Heart right ventricle (tissue), 16 donors: ENCODE measurements at regions of chr14 and their contacts with region 1.

Region 1: GRCh38 chr14:50003213-50004031 is 110.5 kb downstream of the ARF6 start:
- DNase-seq: peak; percentile 80 to 85
- ATAC-seq: peak; percentile 48 to 81 (median 60)
- H3K4me3 ChIP-seq: peak overlapping the region; percentile 1 to 66 (median 60)
- H3K27ac ChIP-seq: peak overlapping the region; percentile 16 to 94 (median 84)
- H3K4me1 ChIP-seq: peaks cover 14 to 60% (median 51%) of the 10 kb centered on the region in 9 donors
- H3K27me3 ChIP-seq: no peaks in the 10 kb centered on the region
- CTCF ChIP-seq: peak in 6 of 9 donors; percentile 14 to 54 (median 34)

Region 2: GRCh38 chr14:49560374-49560768 is 443.1 kb before region 1 on chr14:
- intact Hi-C with region 1: no loop called
- DNase-seq: no peak
- ATAC-seq: no peak
- H3K4me3 ChIP-seq: no peak overlapping the region
- H3K27ac ChIP-seq: no peak overlapping the region
- H3K4me1 ChIP-seq: no peaks in the 10 kb centered on the region
- H3K27me3 ChIP-seq: no peaks in the 10 kb centered on the region
- CTCF ChIP-seq: no peak

Region 3: DNA sequence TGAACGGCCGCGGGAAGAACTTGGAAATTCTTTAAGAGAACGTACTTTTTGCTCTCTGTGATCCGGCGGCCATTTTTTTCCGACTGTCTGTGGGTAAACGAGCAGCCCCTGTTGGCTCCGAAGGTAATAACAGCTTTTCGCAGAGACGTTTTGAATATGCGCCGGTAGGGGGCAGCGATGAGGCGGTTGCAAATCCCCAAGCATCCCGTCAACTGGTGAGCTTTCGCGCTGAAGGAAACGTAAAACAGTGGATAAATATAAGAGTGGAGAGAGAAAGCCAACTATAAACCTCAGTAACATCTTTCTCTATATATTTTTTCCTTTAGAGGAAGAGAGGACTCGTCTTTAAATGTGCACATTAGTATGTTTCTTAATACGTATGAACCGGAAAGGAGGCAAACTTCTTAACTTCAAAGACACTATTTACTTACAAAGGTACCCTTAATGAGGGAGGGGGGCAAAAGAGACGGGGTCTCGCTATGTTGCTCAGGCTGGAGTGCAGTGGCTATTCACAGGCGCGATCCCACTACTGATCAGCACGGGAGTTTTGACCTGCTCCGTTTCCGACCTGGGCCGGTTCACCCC is 141.2 kb before region 1 on chr14:
- intact Hi-C with region 1: loop called in 2 of 10 experiments (anchors 5 to 10 kb)
- DNase-seq: peak; percentile 72 to 86
- ATAC-seq: peak; percentile 38 to 73 (median 55)
- H3K4me3 ChIP-seq: peak overlapping the region; percentile 48 to 92 (median 64)
- H3K27ac ChIP-seq: peak overlapping the region; percentile 93 to 98 (median 96)
- H3K4me1 ChIP-seq: peaks cover 0 to 43% (median 15%) of the 10 kb centered on the region in 9 donors
- H3K27me3 ChIP-seq: no peaks in the 10 kb centered on the region
- CTCF ChIP-seq: peak in 7 of 9 donors; percentile 100

Region 4: DNA sequence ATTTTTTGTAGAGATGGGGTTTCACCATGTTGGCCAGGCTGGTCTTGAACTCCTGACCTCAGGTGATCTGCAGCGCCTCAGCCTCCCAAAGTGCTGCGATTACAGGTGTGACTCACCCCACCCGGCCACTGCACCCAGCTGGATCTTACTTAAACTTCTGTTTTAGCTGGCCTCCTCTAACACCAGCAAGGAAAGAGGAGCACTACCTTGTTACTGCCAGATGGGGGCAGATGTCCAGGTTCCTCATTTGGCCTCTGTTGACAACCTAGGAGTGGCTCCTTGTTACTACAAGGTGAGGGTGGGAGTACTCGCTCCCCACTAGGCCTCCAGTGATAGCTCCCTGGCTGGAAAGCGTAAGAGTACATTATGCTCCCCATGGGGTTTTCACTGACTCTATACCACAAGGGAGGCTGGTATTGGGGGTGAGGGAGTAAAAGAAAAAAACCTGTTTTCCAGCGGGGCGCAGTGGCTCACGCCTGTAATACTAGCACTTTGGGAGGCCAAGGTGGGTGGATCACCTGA is 123.7 kb before region 1 on chr14:
- intact Hi-C with region 1: loop called in 1 of 10 experiments (anchors 10 kb)
- DNase-seq: peak in 1 of 2 donors; percentile 30
- ATAC-seq: peak in 7 of 8 donors; percentile 50 to 81 (median 75)
- H3K4me3 ChIP-seq: no peak overlapping the region
- H3K27ac ChIP-seq: peak overlapping the region in 1 of 10 donors; percentile 37
- H3K4me1 ChIP-seq: peaks cover 0 to 17% (median 0%) of the 10 kb centered on the region in 9 donors
- H3K27me3 ChIP-seq: no peaks in the 10 kb centered on the region
- CTCF ChIP-seq: peak; percentile 21 to 73 (median 65)

Region 5: GRCh38 chr14:50045039-50045711 is 41.8 kb after region 1 on chr14:
- intact Hi-C with region 1: loop called in 2 of 10 experiments (anchors 5 kb)
- DNase-seq: peak; percentile 71 to 83
- ATAC-seq: peak; percentile 80 to 93 (median 90)
- H3K4me3 ChIP-seq: no peak overlapping the region
- H3K27ac ChIP-seq: peak overlapping the region in 9 of 10 donors; percentile 31 to 87 (median 74)
- H3K4me1 ChIP-seq: peaks cover 5 to 71% (median 51%) of the 10 kb centered on the region in 9 donors
- H3K27me3 ChIP-seq: no peaks in the 10 kb centered on the region
- CTCF ChIP-seq: peak in 1 of 9 donors; percentile 11

Region 6: GRCh38 chr14:50101417-50101816 is 98.0 kb after region 1 on chr14:
- intact Hi-C with region 1: loop called in 2 of 10 experiments (anchors 5 to 10 kb)
- DNase-seq: no peak
- ATAC-seq: no peak
- H3K4me3 ChIP-seq: no peak overlapping the region
- H3K27ac ChIP-seq: no peak overlapping the region
- H3K4me1 ChIP-seq: peaks cover 0 to 6% (median 0%) of the 10 kb centered on the region in 9 donors
- H3K27me3 ChIP-seq: no peaks in the 10 kb centered on the region
- CTCF ChIP-seq: no peak